ENCODE measurements at regions of chr11 and their contacts with region 1.

Region 1: DNA sequence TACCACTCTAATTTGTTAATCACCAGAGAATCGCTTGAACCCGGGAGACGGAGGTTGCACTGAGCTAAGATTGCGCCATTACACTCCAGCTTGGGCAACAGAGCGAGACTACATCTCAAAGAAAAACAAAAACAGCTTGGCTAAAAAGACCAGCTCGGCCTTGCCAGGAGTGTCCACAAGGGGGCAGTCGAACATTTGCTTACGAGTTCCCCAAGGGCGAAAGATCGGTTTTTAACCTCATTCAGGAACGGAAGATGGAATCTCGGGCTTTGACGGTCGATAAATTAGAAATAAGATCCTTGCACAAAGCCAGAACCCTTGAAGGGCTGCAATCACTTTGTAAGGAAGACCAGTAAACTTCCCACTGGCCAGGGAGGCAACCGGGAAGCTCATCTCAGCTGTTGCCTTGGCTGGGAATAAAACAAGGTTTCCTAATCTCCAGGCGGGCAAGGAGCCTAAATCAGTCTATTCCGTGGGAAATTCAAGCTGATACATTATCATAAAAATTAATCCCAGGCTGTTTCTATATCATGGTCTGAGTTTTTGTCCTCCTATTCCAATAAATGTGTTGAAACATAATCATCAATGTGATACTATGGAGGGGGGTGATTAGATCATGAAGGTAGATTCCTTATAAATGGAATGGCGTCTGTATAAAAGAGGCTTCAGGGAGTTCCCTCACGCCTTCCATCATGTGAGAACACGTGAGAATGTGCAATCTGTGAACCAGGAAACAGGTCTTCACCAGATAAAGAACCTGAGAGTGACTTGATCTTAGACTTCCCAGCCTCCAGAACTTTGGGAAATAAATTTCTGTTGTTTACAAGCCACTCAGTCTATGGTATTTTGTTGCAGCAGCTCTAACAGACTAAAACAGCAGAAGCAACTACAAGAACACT is 14.9 kb upstream of the SLC29A2 start:
- DNase-seq: peak; percentile 93
- H3K4me3 Mint-ChIP-seq: peak overlapping the region; percentile 17
- H3K27ac Mint-ChIP-seq: no peak overlapping the region
- H3K4me1 Mint-ChIP-seq: peaks cover 6% of the 10 kb centered on the region
- H3K27me3 Mint-ChIP-seq: no peaks in the 10 kb centered on the region

Region 2: DNA sequence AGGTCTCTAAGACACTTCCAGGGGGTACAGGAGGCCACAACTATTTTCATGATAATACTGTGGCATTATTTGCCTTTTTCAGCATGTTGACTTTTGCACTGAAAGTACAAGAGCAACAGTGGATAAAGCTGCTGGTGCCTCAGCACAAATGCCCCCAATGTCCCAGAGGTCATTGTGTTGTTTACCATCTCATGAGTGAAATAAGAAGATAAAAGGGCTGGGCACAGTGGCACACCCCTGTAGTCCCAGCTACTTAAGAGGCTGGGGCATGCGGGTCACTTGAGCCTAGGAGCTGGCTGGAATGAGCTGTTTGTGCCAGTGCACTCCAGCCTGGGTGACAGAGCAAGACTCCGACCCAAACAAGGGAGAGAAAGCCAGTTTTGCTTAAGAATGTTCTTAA is 190.6 kb before region 1 on chr11:
- CTCF ChIA-PET with region 1: no interaction called
- intact Hi-C with region 1: no loop called
- DNase-seq: no peak
- H3K4me3 Mint-ChIP-seq: no peak overlapping the region
- H3K27ac Mint-ChIP-seq: no peak overlapping the region
- H3K4me1 Mint-ChIP-seq: peaks cover 2% of the 10 kb centered on the region
- H3K27me3 Mint-ChIP-seq: no peaks in the 10 kb centered on the region

Region 3: GRCh38 chr11:66328307-66329144 is 57.9 kb before region 1 on chr11:
- CTCF ChIA-PET with region 1: interaction called, 6 read pairs
- intact Hi-C with region 1: loop called (anchors 1 kb)
- DNase-seq: peak; percentile 90
- H3K4me3 Mint-ChIP-seq: peak overlapping the region; percentile 34
- H3K27ac Mint-ChIP-seq: peak overlapping the region; percentile 74
- H3K4me1 Mint-ChIP-seq: peaks cover 38% of the 10 kb centered on the region
- H3K27me3 Mint-ChIP-seq: no peaks in the 10 kb centered on the region

Region 4: DNA sequence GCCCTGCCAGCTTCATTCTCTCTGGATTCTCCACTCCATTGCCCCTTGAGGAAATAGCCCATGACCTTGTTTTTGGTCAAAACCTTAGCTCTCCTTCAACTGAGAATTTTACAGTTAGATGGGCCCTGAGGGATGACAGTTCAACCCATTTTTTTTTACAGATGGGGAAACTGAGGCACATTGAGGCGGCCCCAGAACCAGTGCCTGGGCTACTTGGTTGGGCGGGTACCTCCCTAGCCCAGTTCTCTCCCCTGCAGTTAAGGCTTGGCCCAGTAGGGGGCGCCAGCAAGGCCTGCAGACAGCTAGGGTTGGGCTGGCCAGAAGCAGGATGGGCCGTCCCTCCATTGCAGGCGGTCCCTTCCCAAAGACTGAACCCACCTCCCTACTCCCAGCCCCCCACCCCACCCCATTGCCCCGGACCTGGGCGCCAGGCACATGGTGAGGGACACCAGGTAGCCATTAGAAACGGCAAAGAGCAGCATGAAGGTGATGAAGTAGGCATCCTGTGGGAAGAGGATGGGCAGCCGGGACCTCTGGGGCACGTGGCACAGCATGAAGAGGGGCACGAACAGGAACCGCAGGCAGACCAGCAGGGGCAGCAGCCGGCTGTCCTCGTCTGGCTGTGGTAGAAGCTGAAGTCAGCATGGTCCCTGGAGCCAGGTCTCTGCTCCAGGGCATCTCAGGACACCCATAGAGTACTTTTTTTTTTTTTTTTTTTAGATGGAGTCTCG is 22.4 kb before region 1 on chr11:
- CTCF ChIA-PET with region 1: interaction called, 15 read pairs
- intact Hi-C with region 1: loop called (anchors 1 kb)
- DNase-seq: peak; percentile 85
- H3K4me3 Mint-ChIP-seq: no peak overlapping the region
- H3K27ac Mint-ChIP-seq: no peak overlapping the region
- H3K4me1 Mint-ChIP-seq: no peaks in the 10 kb centered on the region
- H3K27me3 Mint-ChIP-seq: no peaks in the 10 kb centered on the region

Region 5: DNA sequence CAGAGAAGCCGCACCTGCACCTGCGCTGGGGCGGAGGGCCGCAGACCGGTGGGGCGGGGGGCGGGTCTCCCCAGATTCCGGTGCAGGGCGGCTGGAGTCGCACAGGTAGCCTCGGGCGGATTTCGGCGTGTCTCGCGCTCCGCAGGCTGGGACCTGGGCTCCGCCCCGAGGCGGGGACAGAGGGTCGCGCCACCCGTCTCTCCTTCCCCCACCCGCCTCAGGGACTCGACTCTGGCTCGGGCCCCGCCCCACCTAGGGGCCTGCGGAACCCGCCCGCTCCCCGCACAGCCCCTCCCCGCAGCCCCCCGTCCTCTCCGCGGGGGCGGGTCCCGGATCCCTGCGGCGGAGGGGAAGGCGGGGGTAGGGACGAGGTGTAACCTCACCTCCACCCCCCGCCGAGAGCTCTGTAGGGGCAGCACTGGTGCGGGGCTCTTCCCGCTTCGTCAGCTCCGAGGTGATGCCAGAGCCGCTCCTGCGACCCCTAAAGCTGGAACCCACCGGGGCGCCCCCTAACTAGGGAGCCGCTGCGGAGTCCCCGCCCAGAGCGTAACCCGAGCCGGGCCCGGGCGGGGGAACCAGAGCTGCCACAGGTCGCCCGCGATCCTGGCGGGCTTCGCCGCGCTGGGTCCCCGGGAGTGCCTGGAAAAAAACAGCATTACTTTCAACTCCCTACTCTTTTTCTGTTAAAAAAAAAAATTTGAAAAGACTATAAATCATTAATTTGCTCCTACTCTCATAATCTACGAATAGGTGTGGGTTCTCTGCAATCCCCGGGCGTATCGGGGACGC is 14.6 kb before region 1 on chr11 and contains the start of gene SLC29A2:
- CTCF ChIA-PET with region 1: interaction called, 20 read pairs
- intact Hi-C with region 1: loop called (anchors 2 kb)
- DNase-seq: peak; percentile 80
- H3K4me3 Mint-ChIP-seq: peak within 1 kb of the TSS; percentile 83
- H3K27ac Mint-ChIP-seq: peak within 1 kb of the TSS; percentile 90
- H3K4me1 Mint-ChIP-seq: peaks cover 15% of the 10 kb centered on the region
- H3K27me3 Mint-ChIP-seq: no peaks in the 10 kb centered on the region
- total RNA-seq, gene SLC29A2: 6.6 to 7.4 TPM